PC-3 (cell line): ENCODE measurements at regions of chr1 and their contacts with region 1.

Region 1: DNA sequence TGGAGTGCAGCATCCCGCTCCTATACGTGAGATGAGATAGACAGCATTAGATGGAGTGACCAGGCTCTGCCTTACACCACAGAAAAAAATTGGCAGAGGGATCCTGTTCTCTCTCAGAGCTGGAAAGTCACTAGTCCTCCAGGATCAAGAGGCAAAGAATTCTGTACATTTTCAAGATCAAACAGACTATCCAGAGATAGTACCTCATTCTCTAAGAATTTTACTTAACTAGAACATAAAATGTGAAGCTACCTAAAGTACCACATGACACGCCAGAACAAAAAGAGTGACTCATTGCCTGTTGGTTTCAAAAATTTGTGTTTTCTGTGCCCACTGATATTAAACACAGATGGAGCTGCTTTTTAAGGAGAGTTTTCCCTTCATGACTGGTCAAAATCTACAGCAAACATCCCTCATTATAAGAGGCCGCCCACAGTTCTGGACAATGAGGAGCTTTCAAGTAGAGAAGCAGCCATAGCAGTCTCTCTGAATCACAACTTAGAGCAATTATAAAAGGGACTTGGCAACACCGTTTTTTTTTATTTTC is 32.3 kb downstream of the CD160 start:
- DNase-seq: peak; percentile 65
- ATAC-seq: peak; percentile 87
- H3K4me3 ChIP-seq: no peak overlapping the region
- H3K27ac ChIP-seq: peak overlapping the region; percentile 52
- H3K4me1 ChIP-seq: peaks cover 14% of the 10 kb centered on the region
- H3K27me3 ChIP-seq: no peaks in the 10 kb centered on the region
- CTCF ChIP-seq: 0 out of 2 replicates have a peak, but pooled peaks have one; percentile 12

Region 2: DNA sequence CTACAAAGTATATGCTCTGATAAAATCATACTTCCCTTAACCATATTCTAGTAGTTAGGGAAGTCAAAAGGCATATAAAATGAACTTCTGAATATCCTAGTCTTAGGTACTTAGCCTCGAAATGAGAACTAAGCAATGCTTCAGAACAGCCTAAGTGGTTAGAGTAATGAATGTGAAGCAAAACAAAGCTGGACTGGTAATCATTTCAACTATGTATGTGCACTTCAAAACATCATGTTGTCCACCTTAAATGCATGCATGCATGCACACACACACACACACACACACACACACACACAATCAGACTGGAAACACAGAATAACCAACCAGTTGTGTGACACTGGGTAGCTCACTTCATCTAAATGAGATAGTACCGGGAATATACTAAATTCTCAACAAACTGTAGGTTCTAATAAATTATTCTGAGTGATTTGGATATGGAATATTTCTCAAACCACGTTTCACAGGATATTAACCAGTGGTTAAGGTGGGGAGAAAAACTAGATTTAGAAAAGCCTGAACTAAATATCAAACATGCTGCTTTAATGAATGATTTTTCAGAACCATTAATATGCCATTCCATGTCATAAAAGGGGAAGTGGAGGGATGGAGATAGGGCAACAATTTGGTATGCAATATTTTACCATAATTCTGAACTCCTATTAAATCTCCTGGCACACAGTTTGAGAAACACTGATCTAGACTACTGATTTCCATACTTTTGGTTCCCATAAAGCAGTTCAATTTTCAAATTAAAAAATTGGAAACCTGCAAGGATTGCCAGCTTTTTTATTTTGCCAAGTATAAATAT is 52.9 kb after region 1 on chr1:
- CTCF ChIA-PET with region 1: no interaction called
- POLR2A ChIA-PET with region 1: no interaction called
- intact Hi-C with region 1: loop called (anchors 10 kb)
- DNase-seq: no peak
- ATAC-seq: no peak; the same call in 1 of the 2 replicates
- H3K4me3 ChIP-seq: no peak overlapping the region
- H3K27ac ChIP-seq: peak overlapping the region; percentile 59
- H3K4me1 ChIP-seq: peaks cover 26% of the 10 kb centered on the region
- H3K27me3 ChIP-seq: no peaks in the 10 kb centered on the region
- CTCF ChIP-seq: no peak

Region 3: GRCh38 chr1:145837656-145838055 is 86.1 kb after region 1 on chr1:
- CTCF ChIA-PET with region 1: no interaction called
- POLR2A ChIA-PET with region 1: no interaction called
- intact Hi-C with region 1: no loop called
- DNase-seq: peak; percentile 42
- ATAC-seq: peak; percentile 76
- H3K4me3 ChIP-seq: no peak overlapping the region
- H3K27ac ChIP-seq: no peak overlapping the region
- H3K4me1 ChIP-seq: no peaks in the 10 kb centered on the region
- H3K27me3 ChIP-seq: no peaks in the 10 kb centered on the region
- CTCF ChIP-seq: no peak

Region 4: DNA sequence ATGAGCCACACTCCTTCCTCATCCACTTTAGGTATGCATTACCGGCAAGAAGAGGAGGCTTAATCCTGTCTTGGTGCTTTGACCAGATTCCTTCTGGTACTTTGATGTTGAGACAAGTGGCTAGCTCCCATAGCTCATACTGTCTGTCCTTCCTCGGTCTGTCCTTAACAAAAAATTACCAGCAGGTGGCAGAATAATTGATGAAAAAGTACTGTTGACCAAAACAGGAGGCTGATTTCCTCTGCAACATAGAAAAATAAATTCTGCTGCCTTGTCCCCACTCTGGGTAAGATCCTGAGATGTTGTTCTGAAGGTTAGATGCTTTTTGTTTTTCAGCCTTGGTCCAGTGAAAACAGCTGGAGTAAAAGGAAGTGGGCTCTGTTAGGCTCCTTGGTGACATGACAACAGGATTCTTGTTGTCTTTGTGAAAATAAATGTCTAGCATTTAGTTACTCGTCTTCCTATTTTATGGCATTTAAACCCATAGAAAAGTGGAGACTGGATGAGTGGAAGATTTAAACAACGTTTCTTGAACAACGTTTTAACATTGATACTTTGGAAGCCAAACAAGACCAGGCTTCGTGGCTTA is 281.2 kb after region 1 on chr1:
- CTCF ChIA-PET with region 1: no interaction called
- POLR2A ChIA-PET with region 1: interaction called, 11 read pairs
- intact Hi-C with region 1: no loop called
- DNase-seq: peak; percentile 81
- ATAC-seq: peak; percentile 14
- H3K4me3 ChIP-seq: no peak overlapping the region
- H3K27ac ChIP-seq: no peak overlapping the region
- H3K4me1 ChIP-seq: peaks cover 11% of the 10 kb centered on the region; the same call in 1 of the 2 replicates
- H3K27me3 ChIP-seq: no peaks in the 10 kb centered on the region
- CTCF ChIP-seq: peak; percentile 79